Lower leg skin (tissue), 4 donors: ENCODE measurements at regions of chr14 and their contacts with region 1.

Region 1: DNA sequence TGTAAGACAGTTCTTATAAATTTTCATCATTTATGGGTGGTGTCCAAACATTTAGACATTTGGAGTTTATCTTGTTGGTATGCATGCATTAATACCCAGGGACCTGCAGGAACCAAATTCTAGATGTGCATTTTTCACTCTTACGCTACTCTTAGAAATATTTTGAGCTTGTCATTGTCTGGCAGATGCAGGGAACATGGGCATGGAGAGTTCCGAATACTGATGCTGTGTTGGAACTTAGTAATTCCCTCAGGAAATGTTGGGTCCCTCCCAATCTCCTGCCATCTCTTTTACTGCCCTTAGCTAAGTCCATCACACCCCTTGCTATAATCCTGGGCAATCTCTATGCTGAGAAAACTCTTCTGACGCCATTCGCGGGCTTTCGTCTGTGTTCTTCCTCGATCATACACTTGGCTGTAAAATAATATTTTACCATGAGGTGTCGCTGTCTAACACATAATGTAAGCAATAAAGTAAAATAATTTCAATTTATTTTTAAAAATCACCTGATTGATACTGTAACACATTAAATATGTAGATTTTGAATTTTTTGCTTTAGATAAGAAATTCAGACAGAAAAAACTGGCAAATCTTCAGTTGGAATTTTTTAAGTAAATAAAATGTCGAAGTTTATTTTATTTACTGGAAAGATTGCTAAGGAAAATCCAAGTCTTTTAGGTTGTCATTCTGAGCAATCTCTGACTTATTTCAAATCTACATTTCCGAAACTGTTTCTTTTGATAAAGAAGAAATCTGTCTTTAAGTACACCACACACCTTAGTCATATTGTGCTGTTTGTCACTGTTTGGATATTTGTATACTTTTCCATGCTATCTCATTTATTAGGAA is 304.1 kb upstream of the SSTR1 start:
- DNase-seq: no peak
- H3K4me3 ChIP-seq: no peak overlapping the region
- CTCF ChIP-seq: no peak
- POLR2A ChIP-seq: no peak

Region 2: DNA sequence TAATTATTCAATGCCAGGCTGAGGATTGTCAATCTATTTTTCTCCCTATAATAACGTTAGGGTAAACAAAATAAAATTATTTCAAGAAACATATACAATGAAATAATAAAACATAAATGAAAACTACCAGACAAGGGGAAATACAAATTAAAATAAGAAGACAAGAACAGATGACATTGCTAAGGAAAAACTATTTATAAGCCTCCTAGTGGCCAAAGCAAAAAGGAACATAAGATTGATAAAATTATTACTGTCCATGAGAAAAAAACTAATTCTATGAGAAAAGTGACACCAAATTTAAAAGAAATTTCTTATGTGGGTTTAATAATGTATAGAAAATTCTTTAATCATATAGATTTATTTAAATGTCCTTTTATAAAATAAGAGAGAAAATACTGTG is 13.5 kb before region 1 on chr14:
- intact Hi-C with region 1: no loop called
- DNase-seq: no peak
- H3K4me3 ChIP-seq: no peak overlapping the region
- CTCF ChIP-seq: no peak
- POLR2A ChIP-seq: no peak

Region 3: DNA sequence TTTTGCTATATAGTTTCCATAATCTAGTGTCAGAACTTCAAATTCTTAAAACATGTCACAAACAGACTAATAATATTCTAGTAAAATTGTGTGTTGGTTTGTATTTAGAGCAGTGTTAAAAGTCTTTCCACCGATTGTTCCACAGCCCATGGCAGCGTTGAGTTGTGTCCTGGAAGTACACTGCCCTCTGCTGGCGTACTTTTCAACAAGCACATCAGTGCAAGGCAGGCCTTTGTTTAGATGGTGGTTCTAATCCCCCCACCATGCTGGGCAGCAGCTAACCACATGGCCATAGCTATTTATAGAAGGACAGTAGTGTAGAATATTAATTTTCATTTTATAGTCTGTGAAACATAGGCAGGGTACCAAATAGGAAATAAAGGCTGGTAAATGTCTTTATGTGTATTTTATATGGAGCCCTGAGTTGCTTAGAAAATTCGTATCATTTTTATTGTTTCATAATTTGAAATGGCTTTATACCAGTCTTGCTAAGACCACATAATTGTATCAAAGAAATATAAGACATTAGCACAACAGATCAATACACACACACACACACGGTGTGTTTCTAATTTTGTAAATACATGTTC is 964.1 kb after region 1 on chr14:
- intact Hi-C with region 1: loop called (anchors 10 kb)
- DNase-seq: peak in 1 of 2 donors; percentile 70
- H3K4me3 ChIP-seq: no peak overlapping the region
- CTCF ChIP-seq: no peak
- POLR2A ChIP-seq: no peak